A673 (cell line): ENCODE measurements at regions of chr7 and their contacts with region 1.

Region 1: GRCh38 chr7:30814700-30815387 is 43.6 kb downstream of the MINDY4 start:
- DNase-seq: no peak
- H3K4me3 ChIP-seq: no peak overlapping the region
- H3K27ac ChIP-seq: no peak overlapping the region
- H3K4me1 ChIP-seq: no peaks in the 10 kb centered on the region
- H3K27me3 ChIP-seq: no peaks in the 10 kb centered on the region
- CTCF ChIP-seq: no peak

Region 2: DNA sequence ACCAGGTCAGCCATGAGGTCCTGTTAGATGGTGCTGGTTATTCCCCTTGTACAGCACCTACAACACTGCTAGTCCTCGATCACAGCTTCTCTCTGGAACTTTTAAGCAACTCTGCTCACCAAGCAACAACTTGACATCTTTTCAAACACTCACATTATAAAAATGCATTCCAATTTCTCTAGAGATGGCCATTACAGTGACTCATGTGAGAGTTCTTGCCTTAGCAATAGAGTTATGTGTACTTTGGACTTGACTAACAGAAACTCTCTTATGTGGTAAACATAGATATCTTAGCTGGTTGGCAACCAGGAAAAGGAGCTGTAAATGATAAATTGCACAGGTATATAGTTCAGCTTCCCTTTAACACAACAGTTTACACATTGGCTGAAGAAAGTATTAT is 1133.2 kb after region 1 on chr7:
- CTCF ChIA-PET with region 1: no interaction called
- POLR2A ChIA-PET with region 1: no interaction called
- intact Hi-C with region 1: loop called (anchors 10 kb)
- DNase-seq: no peak
- H3K4me3 ChIP-seq: no peak overlapping the region
- H3K27ac ChIP-seq: no peak overlapping the region
- H3K4me1 ChIP-seq: no peaks in the 10 kb centered on the region
- H3K27me3 ChIP-seq: no peaks in the 10 kb centered on the region
- CTCF ChIP-seq: no peak